Motor neuron (in vitro differentiated cells): ENCODE measurements at regions of chr1 and their contacts with region 1.

Region 1: GRCh38 chr1:25239681-25240541 is 7.3 kb downstream of the RSRP1 start:
- ATAC-seq: peak; percentile 86 to 93 (median 91)
- H3K4me3 ChIP-seq: peak overlapping the region; percentile 30 to 48 (median 41)
- H3K27ac ChIP-seq: peak overlapping the region; percentile 81 to 83
- H3K4me1 ChIP-seq: peaks cover 6 to 14% of the 10 kb centered on the region in 2 donors

Region 2: DNA sequence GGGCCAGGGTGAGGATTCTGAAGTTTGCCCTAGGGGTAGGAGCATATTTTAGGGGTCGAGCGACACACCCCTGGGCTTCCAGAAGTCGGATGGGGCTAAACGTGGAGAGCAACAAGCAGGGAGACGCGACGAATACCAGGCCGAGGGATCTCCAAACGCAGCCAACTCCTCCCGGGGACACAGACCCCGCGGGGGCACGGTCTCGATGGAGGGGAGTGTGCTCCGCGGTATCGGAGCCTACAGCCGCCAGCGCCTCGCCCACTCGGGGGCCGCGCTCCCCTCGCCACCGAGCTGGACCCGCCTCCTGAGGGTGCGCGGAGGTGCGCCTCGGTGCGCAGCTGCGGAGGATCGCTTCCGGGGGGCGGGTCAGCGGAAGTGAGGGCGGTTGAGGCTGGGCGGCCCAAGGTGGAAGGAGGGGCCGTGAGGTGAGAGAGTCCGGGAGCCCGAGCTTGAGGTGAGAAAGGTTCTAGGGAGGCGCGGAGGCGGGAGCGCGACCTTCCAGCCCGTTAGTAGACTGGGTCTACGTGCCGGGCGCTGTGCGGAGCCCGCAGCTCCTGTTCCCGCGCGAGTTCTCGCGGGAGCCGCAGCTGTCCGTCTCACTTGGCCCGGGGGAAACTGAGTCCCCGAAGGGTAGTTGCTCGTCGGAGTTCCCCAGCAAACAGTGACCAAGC is 579.8 kb after region 1 on chr1 and contains the start of gene MTFR1L:
- in situ Hi-C with region 1: loop called in 2 of 9 experiments (anchors 25 kb)
- ATAC-seq: peak; percentile 73 to 93 (median 89)
- H3K4me3 ChIP-seq: peak within 1 kb of the TSS; percentile 62 to 99 (median 64)
- H3K27ac ChIP-seq: peak within 1 kb of the TSS; percentile 85 to 90
- H3K4me1 ChIP-seq: peaks cover 14 to 16% of the 10 kb centered on the region in 2 donors
- total RNA-seq, gene MTFR1L: 58.3 to 92.1 (median 66.7) TPM